ENCODE measurements at regions of chr7 and their contacts with region 1.

Region 1: GRCh38 chr7:100705753-100706671 is at the start of gene POP7:
- DNase-seq: peak; percentile 98
- ATAC-seq: peak; percentile 91
- H3K4me3 ChIP-seq: peak within 1 kb of the TSS; percentile 96
- H3K27ac ChIP-seq: peak within 1 kb of the TSS; percentile 58
- H3K4me1 ChIP-seq: peaks cover 9% of the 10 kb centered on the region
- H3K27me3 ChIP-seq: no peaks in the 10 kb centered on the region
- CTCF ChIP-seq: no peak
- total RNA-seq, gene POP7: 151 and 154 TPM in 2 replicates

Region 2: DNA sequence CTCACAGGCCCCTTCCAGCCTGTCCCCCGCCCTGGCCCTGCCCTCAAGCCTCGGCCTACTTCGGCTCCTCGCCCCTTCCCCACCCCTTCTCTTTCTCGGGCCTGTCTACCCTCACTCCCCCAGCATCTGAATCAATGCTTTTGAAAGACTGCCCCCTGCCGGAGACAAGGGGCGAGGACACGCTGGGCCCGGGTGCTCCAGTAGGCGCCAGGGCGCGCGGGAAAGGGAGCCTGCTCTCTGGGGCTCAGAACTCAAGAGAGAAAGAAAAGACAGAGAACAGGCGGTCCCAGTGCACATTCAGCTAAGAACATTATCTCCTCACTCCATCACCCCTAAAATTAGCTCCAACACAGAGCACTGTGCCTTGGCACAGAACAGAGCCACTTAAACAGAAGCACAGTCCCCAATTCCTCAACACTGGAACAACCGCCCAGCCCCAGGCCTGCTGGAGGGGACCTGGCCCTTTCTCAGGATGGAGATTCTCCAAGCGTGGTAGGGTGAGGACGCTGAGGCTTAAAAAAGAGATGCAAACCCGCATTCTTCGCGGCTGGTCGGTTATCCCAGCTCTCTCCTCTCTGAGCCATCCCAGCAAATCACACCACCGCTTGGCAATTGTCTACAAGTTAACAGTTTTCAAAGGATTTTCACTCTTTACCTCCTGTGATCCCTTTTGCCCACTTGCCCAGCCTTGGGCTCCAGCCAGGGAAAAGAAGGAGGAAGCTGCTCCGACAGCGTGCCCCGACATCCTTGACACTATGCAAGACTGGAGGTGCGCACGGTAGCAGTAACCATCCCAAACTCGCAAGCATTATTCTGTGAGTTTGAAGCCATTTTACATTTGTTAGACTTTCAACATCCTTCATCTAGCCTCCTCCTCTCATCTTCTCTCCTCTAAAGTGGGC is 14.1 kb before region 1 on chr7:
- CTCF ChIA-PET with region 1: interaction called, 13 read pairs
- POLR2A ChIA-PET with region 1: interaction called, 6 read pairs
- intact Hi-C with region 1: no loop called
- DNase-seq: peak; percentile 78
- ATAC-seq: peak; percentile 75
- H3K4me3 ChIP-seq: peak overlapping the region; percentile 96
- H3K27ac ChIP-seq: no peak overlapping the region
- H3K4me1 ChIP-seq: peaks cover 12% of the 10 kb centered on the region
- H3K27me3 ChIP-seq: no peaks in the 10 kb centered on the region
- CTCF ChIP-seq: peak; percentile 94

Region 3: GRCh38 chr7:100726996-100727761 is 21.2 kb after region 1 on chr7:
- CTCF ChIA-PET with region 1: interaction called, 39 read pairs
- POLR2A ChIA-PET with region 1: no interaction called
- intact Hi-C with region 1: loop called (anchors 1 kb)
- DNase-seq: peak; percentile 41
- ATAC-seq: 0 out of 2 replicates have a peak, but pooled peaks have one; percentile 14
- H3K4me3 ChIP-seq: no peak overlapping the region
- H3K27ac ChIP-seq: no peak overlapping the region
- H3K4me1 ChIP-seq: peaks cover 13% of the 10 kb centered on the region
- H3K27me3 ChIP-seq: no peaks in the 10 kb centered on the region
- CTCF ChIP-seq: no peak

Region 4: GRCh38 chr7:100803398-100804233 is 97.6 kb after region 1 on chr7:
- CTCF ChIA-PET with region 1: interaction called, 16 read pairs
- POLR2A ChIA-PET with region 1: no interaction called
- intact Hi-C with region 1: no loop called
- DNase-seq: peak; percentile 87
- ATAC-seq: peak; percentile 57
- H3K4me3 ChIP-seq: peak overlapping the region; percentile 34; the same call in 1 of the 2 replicates
- H3K27ac ChIP-seq: peak overlapping the region; percentile 96
- H3K4me1 ChIP-seq: peaks cover 46% of the 10 kb centered on the region
- H3K27me3 ChIP-seq: no peaks in the 10 kb centered on the region
- CTCF ChIP-seq: no peak

Region 5: GRCh38 chr7:100852048-100852872 is 146.2 kb after region 1 on chr7 and contains the start of gene SLC12A9:
- CTCF ChIA-PET with region 1: interaction called, 24 read pairs
- POLR2A ChIA-PET with region 1: no interaction called
- intact Hi-C with region 1: loop called (anchors 1 kb)
- DNase-seq: peak; percentile 85
- ATAC-seq: peak; percentile 98
- H3K4me3 ChIP-seq: peak within 1 kb of the TSS; percentile 96
- H3K27ac ChIP-seq: peak within 1 kb of the TSS; percentile 79
- H3K4me1 ChIP-seq: peaks cover 12% of the 10 kb centered on the region; the same call in 1 of the 2 replicates
- H3K27me3 ChIP-seq: no peaks in the 10 kb centered on the region
- CTCF ChIP-seq: peak; percentile 91
- total RNA-seq, gene SLC12A9: 25.9 and 31.2 TPM in 2 replicates

Region 6: DNA sequence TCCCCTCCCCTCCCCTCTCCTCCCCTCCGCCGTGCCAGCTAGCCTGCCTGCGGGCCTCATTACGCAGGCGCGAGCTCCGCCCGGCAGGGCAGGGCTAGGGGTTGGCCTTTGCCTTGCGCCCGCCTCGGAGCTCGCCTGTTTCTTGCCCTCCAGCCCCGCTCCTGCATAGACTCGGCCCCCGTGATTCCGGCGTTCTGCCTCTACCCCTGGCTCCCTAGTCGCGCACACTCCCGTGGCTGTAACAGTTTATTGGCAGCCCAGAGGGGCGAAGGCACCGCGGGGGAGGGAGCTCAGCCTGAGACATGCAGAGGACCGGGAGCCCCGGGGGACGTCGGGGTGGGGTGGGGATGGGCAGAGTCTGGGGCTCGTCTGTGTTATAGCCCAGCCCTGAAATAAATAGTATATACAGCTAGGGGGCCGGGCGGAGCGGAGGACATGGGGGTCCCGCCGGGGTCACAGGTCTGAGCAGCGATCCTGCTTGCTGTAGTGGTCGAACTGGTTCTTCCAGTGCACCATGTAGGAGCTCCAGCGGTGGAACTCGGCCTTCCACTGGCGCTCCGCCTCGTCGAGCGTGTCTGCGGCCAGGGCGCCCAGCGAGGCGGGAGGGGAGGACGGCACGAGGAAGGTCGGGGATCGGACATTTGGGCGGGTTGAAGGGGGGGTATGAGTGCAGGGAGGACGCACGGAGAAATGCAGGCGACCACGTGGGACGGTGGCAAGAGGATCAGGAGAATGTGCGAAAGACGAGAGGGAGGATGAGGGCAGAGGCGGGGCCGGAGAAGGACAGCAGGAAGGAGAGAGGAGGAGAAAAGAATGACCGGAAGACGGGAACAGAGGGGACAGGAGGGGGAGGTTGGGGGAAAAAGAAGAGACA is 184.0 kb after region 1 on chr7:
- CTCF ChIA-PET with region 1: interaction called, 16 read pairs
- POLR2A ChIA-PET with region 1: no interaction called
- intact Hi-C with region 1: no loop called
- DNase-seq: peak; percentile 90
- ATAC-seq: peak; percentile 82
- H3K4me3 ChIP-seq: peak overlapping the region; percentile 72
- H3K27ac ChIP-seq: peak overlapping the region; percentile 89
- H3K4me1 ChIP-seq: peaks cover 37% of the 10 kb centered on the region
- H3K27me3 ChIP-seq: peaks cover 1% of the 10 kb centered on the region; the same call in 1 of the 2 replicates
- CTCF ChIP-seq: no peak